Posterior cingulate gyrus (tissue), 11 donors: ENCODE measurements at regions of chr1 and their contacts with region 1.

Region 1: DNA sequence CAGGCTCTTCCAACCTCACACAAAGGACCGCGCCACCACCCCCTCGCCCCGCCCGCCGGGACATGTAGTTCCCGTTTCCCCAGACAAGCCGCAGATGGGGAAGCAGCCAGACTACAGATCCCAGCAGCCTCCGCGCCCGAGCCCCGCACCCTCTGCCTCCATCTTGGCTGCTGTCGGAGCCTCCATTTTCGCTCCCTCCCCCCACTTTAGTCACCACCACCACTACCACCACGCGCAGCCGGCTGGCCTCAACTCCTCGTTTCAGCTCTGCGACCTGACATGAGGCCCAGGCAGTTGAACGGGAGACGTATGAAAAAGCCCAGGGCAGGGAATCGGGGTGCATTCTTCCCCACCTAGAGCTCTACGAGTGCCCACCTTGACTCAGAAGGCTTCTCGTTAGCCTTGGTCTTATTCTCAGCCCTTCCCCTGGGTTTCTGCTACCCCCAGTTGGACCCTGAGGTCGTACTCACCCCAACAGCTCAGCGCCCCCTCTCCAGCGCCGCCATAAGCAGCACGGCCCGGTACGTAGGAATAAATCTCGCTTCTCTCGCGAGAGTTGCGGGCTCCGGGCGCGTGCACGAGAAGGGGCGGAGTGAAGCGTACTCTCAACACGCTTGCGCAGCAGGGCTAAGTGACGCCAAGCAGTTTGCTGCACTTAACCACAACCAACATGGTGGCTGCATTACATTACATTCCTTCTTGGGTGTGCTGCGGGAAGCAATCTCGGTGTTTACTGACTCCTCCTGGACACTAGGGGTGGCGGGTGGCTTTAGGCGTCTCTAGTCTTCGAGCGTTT is at the start of gene CSDE1:
- DNase-seq: peak; percentile 93 to 99 (median 96)

Region 2: DNA sequence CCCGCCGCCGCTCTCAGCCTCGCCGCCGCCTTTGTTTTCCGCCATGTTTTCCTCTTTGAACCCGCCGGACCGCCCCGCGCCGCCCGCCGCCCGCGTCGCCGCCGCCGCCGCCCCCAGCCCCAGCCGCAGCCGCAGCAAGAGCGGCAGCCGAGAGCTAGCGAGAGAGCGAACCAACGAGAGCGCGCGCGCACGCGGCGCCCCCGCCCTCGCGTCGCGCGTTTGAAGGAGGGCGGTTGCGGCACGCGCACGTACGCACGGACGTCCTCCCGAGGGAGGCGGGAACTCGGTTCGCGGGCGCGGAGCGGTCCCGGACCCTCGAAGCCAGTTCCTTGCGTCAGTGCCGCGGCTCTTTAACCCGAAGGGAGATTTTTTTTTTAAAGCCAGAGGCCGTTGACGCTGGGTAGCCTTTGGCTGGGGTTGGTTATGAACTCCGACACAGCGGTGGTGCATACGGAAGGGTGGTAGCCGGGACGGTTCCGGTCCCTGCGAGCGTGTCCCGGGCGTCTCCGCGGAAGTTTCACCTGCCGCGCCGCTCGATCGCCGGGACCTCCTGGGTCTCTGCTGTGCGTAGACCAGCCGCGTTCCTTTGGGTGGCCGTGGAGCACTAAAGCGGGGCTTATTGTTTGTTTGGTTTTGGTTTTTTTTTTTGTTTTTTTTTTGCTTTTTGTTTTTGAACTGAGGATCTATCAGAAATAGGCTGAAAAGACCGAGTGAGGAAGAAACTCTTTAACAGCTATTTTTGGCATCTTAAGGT is 246.4 kb before region 1 on chr1 and contains the start of gene TRIM33:
- intact Hi-C with region 1: loop called (anchors 5 kb)
- DNase-seq: peak; percentile 83 to 99 (median 90)

Region 3: DNA sequence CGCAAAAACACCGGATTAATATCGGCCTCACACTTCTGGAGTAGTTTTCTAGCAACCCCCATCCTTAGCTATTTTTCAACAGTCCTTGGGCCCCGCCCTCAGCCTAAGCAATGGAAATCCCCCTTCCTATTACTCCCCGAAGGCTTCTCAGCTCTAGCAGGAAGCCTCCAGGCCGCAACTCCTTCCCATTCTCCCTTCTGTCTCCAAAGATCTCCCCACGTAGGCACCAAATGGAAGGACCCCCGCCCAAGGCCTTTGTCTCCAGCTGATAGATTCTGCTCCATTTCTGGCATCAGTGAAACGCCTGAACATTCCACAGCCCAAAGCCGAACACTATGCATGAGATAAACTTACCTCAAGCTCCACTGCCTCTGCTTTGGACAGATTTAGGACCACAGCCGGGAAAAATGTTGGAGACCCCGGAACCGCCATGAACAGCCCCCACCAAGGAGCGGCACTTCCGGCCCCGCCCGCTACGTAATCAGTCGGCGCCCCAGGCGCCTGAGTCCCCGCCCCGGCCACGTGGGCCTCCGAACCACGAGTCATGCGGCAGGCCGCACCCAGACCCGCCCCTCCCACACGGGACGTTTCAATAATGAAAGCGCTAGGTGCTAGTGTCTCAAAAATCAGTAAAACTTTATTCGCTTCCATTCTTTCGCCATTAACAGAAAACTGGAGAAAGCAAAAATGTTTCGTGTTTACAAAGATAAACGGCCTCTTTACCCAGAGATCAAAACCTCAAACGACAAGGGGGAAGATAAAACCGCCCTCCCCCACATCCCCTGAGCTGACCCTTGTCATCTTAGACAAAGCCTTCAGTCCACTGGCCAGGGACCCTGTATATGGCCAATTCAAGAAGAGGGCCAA is 41.1 kb before region 1 on chr1 and contains the start of gene NRAS:
- intact Hi-C with region 1: loop called (anchors 1 kb)
- DNase-seq: peak; percentile 87 to 99 (median 94)